ENCODE measurements at regions of chr7 and their contacts with region 1.

Region 1: DNA sequence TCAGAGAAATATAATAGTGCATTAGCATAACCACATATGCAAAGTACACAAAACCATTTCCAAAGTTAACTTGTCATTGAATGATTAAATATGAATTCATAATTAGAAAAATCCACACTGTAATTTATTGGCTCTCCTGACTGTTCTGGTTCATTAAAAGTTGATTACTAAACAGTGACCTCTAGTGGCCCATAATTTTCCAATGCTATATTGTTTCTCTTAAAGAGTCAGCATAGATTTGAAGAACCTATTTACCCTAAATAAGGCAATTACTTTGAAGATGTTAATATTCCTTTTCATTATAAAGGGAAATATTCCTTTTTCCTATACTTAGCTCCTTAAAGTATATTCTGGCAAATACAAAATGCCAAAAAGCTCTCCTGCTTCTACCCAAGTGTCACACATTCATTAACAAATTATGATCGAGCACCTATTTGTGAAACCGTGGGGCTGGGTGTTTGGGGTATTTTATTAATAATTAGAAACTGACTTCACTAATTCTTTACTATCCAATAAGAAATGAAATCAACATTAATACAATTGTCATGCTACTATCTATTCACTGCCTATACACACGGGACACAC is 86.2 kb downstream of the HIBADH start:
- DNase-seq: peak; percentile 16 to 51 (median 24)
- ATAC-seq: peak; percentile 80
- H3K4me3 ChIP-seq: no peak overlapping the region
- H3K27ac ChIP-seq: no peak overlapping the region
- H3K4me1 ChIP-seq: no peaks in the 10 kb centered on the region
- H3K27me3 ChIP-seq: no peaks in the 10 kb centered on the region
- CTCF ChIP-seq: peak in 2 of 3 experiments; percentile 34 to 63; a peak in 3 of 6 replicates
- EP300 ChIP-seq: no peak
- POLR2A ChIP-seq: no peak
- RAD21 ChIP-seq: peak; percentile 44 to 69

Region 2: GRCh38 chr7:27210441-27211083 is 365.9 kb before region 1 on chr7:
- CTCF ChIA-PET with region 1: no interaction called
- POLR2A ChIA-PET with region 1: no interaction called
- in situ Hi-C with region 1: loop called (anchors 10 kb)
- intact Hi-C with region 1: loop called (anchors 5 kb)
- DNase-seq: peak; percentile 48 to 68 (median 64)
- ATAC-seq: peak; percentile 91
- H3K4me3 ChIP-seq: no peak overlapping the region
- H3K27ac ChIP-seq: no peak overlapping the region
- H3K4me1 ChIP-seq: peaks cover 0 to 15% of the 10 kb centered on the region in 2 experiments; a peak in 1 of 5 replicates
- H3K27me3 ChIP-seq: peaks cover 44 to 70% of the 10 kb centered on the region in 2 experiments
- CTCF ChIP-seq: peak; percentile 63 to 73 (median 63)
- EP300 ChIP-seq: no peak
- POLR2A ChIP-seq: no peak
- RAD21 ChIP-seq: peak; percentile 29 to 59; a peak in 3 of 4 replicates

Region 3: DNA sequence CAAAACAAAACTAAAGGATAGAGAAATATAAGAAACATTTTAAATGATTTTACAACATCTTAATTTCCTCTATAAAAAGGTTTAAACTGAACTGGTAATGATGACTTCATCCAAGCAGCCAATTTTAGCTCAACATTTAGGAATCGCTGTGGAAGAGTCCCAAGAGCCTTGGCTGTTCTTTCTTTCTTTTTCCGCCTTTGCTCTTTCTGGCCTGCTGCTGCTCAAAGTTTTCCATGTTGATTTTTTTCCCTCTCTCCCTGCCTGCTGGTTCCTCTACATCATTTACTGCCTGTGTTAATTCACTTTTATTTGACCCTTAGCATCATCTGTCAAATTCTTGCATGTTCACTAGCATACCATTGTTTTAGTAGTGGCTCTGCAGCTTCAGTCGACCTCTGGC is 187.0 kb before region 1 on chr7:
- CTCF ChIA-PET with region 1: no interaction called
- POLR2A ChIA-PET with region 1: no interaction called
- in situ Hi-C with region 1: no loop called
- intact Hi-C with region 1: loop called (anchors 10 kb)
- DNase-seq: no peak
- ATAC-seq: no peak
- H3K4me3 ChIP-seq: no peak overlapping the region
- H3K27ac ChIP-seq: no peak overlapping the region
- H3K4me1 ChIP-seq: no peaks in the 10 kb centered on the region
- H3K27me3 ChIP-seq: no peaks in the 10 kb centered on the region
- CTCF ChIP-seq: no peak
- EP300 ChIP-seq: no peak
- POLR2A ChIP-seq: no peak
- RAD21 ChIP-seq: no peak

Region 4: DNA sequence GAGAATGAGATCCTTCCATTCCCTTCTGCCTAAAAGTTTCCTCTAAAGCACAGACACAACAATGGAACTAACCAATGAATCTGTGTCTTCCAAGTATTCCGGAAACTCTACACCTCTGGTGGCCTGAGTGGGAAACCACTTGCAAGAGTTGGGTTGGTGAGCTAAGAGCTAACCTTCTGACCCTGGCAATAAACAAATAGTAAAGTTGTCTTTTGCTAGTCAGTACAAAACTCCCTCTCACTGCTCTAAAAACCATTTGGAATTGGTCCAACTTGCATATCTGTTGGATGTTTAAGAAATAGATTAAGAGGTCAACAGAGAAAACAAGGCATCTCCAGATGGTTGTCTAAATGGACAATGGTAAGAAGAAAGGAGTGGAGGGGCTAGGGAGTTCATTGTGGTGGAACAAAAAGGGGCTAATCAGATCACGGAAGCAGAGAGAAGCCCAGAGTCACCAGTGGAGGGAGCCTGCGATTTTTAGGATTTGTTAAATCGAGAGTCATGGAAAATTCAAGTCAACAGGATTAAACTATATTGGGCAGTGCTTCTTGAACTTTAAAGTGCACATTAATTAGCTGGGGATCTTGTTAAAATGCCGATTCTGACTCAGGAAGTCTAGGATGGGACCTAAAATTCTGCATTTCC is 141.6 kb before region 1 on chr7:
- CTCF ChIA-PET with region 1: no interaction called
- POLR2A ChIA-PET with region 1: no interaction called
- in situ Hi-C with region 1: no loop called
- intact Hi-C with region 1: loop called (anchors 10 kb)
- DNase-seq: no peak
- ATAC-seq: peak; percentile 44; the same call in 1 of the 3 replicates
- H3K4me3 ChIP-seq: no peak overlapping the region
- H3K27ac ChIP-seq: no peak overlapping the region
- H3K4me1 ChIP-seq: no peaks in the 10 kb centered on the region
- H3K27me3 ChIP-seq: peaks cover 0 to 5% of the 10 kb centered on the region in 2 experiments; a peak in 1 of 5 replicates
- CTCF ChIP-seq: peak in 1 of 3 experiments; percentile 28; a peak in 1 of 6 replicates
- EP300 ChIP-seq: no peak
- POLR2A ChIP-seq: no peak
- RAD21 ChIP-seq: peak in 1 of 2 experiments; percentile 24; a peak in 1 of 4 replicates

Region 5: GRCh38 chr7:27515933-27516332 is 60.5 kb before region 1 on chr7:
- CTCF ChIA-PET with region 1: no interaction called
- POLR2A ChIA-PET with region 1: no interaction called
- in situ Hi-C with region 1: no loop called
- intact Hi-C with region 1: no loop called
- DNase-seq: no peak
- ATAC-seq: no peak
- H3K4me3 ChIP-seq: no peak overlapping the region
- H3K27ac ChIP-seq: no peak overlapping the region
- H3K4me1 ChIP-seq: no peaks in the 10 kb centered on the region
- H3K27me3 ChIP-seq: no peaks in the 10 kb centered on the region
- CTCF ChIP-seq: no peak
- EP300 ChIP-seq: no peak
- POLR2A ChIP-seq: no peak
- RAD21 ChIP-seq: no peak

Region 6: GRCh38 chr7:27677912-27678612 is 101.6 kb after region 1 on chr7:
- CTCF ChIA-PET with region 1: no interaction called
- POLR2A ChIA-PET with region 1: no interaction called
- in situ Hi-C with region 1: no loop called
- intact Hi-C with region 1: no loop called
- DNase-seq: peak; percentile 19 to 64 (median 39)
- ATAC-seq: peak; percentile 91
- H3K4me3 ChIP-seq: no peak overlapping the region
- H3K27ac ChIP-seq: peak overlapping the region; percentile 60
- H3K4me1 ChIP-seq: peaks cover 0 to 21% of the 10 kb centered on the region in 2 experiments; a peak in 3 of 5 replicates
- H3K27me3 ChIP-seq: no peaks in the 10 kb centered on the region
- CTCF ChIP-seq: no peak
- EP300 ChIP-seq: no peak
- POLR2A ChIP-seq: no peak
- RAD21 ChIP-seq: no peak

Region 7: DNA sequence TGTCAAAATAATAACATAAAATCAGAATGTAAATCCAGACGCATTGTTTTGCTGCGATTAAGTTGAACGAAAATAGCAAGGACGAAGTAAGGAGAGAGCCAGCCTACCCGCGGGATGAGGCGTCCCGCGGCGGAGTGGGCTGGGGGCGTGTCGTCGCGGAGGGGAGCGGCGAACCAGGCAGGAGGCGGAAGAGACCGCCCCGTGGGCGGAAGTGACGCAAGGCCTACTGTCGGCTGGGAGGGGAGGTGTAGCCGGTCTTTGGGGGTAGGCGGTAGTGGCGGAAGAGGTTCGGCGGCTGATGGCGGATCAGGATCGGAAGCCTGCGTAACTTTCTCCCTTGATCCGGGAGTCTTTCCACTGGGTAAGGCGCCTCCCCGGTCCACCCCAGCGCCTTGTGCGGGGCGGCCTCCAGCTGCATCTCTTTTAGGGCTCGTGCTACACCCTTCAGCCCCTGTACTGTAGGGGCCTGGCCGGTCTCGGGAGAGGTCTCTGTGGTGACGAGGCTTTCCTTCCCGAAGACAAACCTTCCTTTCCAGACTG is 163.5 kb after region 1 on chr7 and contains the start of gene TAX1BP1:
- CTCF ChIA-PET with region 1: no interaction called
- POLR2A ChIA-PET with region 1: no interaction called
- in situ Hi-C with region 1: no loop called
- intact Hi-C with region 1: no loop called
- DNase-seq: peak; percentile 95 to 97 (median 95)
- ATAC-seq: peak; percentile 89
- H3K4me3 ChIP-seq: peak within 1 kb of the TSS; percentile 91
- H3K27ac ChIP-seq: peak within 1 kb of the TSS; percentile 93
- H3K4me1 ChIP-seq: peaks cover 6 to 11% of the 10 kb centered on the region in 2 experiments
- H3K27me3 ChIP-seq: no peaks in the 10 kb centered on the region
- CTCF ChIP-seq: no peak
- EP300 ChIP-seq: no peak
- POLR2A ChIP-seq: peak; percentile 91
- RAD21 ChIP-seq: no peak
- polyA plus RNA-seq, gene TAX1BP1: 109 TPM

Measured in K562 (cell line).